ENCODE measurements at regions of chr2 and their contacts with region 1.

Region 1: DNA sequence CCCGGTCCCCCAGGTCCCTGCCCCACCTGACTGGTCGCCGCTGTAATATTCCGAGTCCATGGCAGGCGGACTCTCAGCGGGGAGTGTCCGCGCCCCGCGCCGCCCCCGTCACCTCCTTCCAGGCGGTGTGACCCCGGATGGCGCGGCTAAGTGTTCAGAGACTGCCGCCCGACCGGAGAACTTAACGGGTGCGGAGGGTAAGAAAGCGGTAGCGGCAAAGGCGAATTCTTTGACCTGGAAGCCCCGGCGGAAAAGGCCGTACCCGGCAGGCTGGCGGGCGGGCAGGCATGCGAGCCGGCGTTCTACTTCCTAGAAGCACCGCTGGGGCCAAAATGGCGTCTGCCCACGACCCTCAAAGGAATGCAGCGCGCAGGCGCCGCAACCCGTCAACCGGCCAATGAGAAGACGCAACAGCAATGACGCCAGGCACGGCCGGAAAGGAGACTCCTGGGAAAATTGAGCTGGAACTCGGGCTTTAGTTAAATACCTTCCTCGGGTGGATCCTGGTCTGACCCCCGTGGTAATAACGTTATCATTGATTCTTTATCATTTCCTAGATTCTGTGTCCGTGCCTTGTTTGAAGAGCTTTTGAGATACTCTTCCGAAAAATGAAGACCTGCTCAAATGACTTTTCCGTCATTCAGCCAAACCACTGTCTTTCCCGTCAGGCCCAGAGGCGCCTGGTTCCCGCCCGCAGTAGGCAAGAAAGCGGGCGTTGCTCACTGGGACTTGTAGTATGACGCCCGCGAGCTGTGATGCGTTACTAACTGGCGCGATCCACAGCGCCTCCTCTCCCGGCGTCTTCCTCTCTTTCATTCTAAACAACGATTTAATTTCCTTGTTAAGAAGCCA is at the start of gene IWS1:
- DNase-seq: peak; percentile 85 to 95 (median 92)
- ATAC-seq: peak; percentile 94
- H3K4me3 ChIP-seq: peak within 1 kb of the TSS; percentile 87
- H3K4me3 Mint-ChIP-seq: peak within 1 kb of the TSS; percentile 81 to 99 (median 96)
- H3K27ac ChIP-seq: peak within 1 kb of the TSS; percentile 82
- H3K27ac Mint-ChIP-seq: peak within 1 kb of the TSS; percentile 87 to 99 (median 99)
- H3K4me1 ChIP-seq: peaks cover 6 to 9% of the 10 kb centered on the region in 2 donors
- H3K4me1 Mint-ChIP-seq: peaks cover 14 to 49% (median 43%) of the 10 kb centered on the region in 7 donors
- H3K27me3 ChIP-seq: no peaks in the 10 kb centered on the region
- H3K27me3 Mint-ChIP-seq: peaks cover 0 to 9% (median 0%) of the 10 kb centered on the region in 5 donors
- total RNA-seq, gene IWS1: 24.0 to 57.5 (median 43.4) TPM

Region 2: DNA sequence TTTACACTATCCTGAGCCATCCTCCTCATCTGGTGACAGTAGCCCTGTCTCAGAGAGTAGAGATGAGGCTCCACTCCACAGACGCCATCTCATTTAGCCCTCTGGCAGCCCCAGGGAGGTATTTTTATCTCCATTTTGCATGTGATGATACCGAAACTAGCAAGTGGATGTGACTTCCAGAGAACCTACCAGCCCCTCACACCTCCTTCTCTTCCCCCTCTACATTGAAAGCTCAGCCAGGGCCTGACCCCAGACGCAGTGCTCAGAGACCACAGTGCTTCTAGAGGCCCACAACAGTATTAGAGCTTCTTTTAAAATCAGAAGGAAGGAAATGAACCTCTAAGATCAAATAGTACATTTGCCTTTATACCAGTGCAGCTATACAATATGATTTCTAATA is 862.1 kb before region 1 on chr2:
- CTCF ChIA-PET with region 1: no interaction called
- POLR2A ChIA-PET with region 1: no interaction called
- intact Hi-C with region 1: loop called (anchors 5 to 10 kb)
- DNase-seq: peak in 6 of 9 donors; percentile 31 to 47 (median 38)
- ATAC-seq: peak; percentile 70
- H3K4me3 ChIP-seq: peak overlapping the region; percentile 20
- H3K4me3 Mint-ChIP-seq: peak overlapping the region; percentile 68 to 95 (median 84)
- H3K27ac ChIP-seq: peak overlapping the region; percentile 98
- H3K27ac Mint-ChIP-seq: peak overlapping the region; percentile 93 to 99 (median 97)
- H3K4me1 ChIP-seq: peaks cover 56 to 71% of the 10 kb centered on the region in 2 donors
- H3K4me1 Mint-ChIP-seq: peaks cover 75 to 100% (median 95%) of the 10 kb centered on the region in 7 donors
- H3K27me3 ChIP-seq: no peaks in the 10 kb centered on the region
- H3K27me3 Mint-ChIP-seq: no peaks in the 10 kb centered on the region

Region 3: GRCh38 chr2:127387655-127388422 is 138.5 kb before region 1 on chr2 and contains the start of gene MAP3K2:
- CTCF ChIA-PET with region 1: no interaction called
- POLR2A ChIA-PET with region 1: interaction called, 3 read pairs
- intact Hi-C with region 1: loop called (anchors 1 kb)
- DNase-seq: peak; percentile 89 to 97 (median 93)
- ATAC-seq: peak; percentile 88
- H3K4me3 ChIP-seq: peak within 1 kb of the TSS; percentile 78
- H3K4me3 Mint-ChIP-seq: peak within 1 kb of the TSS; percentile 87 to 97 (median 91)
- H3K27ac ChIP-seq: peak within 1 kb of the TSS; percentile 100
- H3K27ac Mint-ChIP-seq: peak within 1 kb of the TSS; percentile 95 to 99 (median 97)
- H3K4me1 ChIP-seq: peaks cover 23 to 30% of the 10 kb centered on the region in 2 donors
- H3K4me1 Mint-ChIP-seq: peaks cover 45 to 71% (median 67%) of the 10 kb centered on the region in 7 donors
- H3K27me3 ChIP-seq: no peaks in the 10 kb centered on the region
- H3K27me3 Mint-ChIP-seq: peaks cover 0 to 1% (median 0%) of the 10 kb centered on the region in 5 donors
- total RNA-seq, gene MAP3K2: 60.5 to 111 (median 84.5) TPM

Region 4: DNA sequence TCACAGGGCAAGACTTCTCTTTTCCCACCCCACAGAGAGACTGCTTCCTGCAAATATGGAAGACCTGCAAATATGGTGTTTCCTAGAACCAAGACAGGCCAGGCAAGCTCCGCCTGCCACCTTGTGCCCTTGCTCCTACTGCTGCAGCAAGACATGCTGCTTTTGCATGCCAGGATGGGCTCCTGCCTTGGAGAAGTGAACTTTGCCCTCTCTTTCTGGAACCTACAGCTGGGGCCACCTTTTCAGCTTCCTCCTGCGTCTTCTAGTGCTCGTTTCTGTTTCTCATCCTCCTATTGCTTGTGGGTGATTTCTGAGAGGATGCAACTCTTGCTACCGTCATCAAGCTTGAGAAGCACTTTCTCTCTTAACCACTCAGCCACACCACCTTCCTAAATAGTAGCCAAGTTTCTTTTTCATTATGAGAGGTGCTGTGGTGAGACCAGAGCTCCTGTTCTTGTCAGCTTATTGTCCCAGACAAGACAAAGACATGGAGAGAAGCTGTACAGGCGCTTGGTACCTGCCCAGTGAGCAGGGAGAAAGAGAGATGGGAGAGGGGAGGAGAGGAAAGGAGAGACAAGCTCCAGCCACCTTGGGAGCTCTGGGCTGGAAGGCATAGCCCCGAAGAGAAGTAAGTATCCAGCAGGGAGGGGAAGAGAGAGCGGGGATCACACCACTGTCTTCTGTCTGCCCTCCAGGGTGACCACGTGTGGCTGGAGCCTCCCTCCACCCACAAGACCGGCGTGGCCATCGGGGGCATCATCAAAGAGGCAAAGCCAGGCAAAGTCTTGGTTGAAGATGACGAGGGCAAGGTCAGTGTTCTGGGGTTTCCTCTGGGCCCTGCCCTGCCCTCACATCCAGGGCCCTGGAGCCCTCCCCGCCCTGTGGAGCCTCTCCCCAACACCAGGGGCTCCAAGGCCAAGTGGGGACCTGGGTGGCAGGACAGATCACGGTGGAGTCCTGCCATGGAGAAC is 37.4 kb after region 1 on chr2:
- CTCF ChIA-PET with region 1: no interaction called
- POLR2A ChIA-PET with region 1: no interaction called
- intact Hi-C with region 1: loop called in 1 of 2 experiments (anchors 1 kb)
- DNase-seq: no peak
- ATAC-seq: no peak
- H3K4me3 ChIP-seq: no peak overlapping the region
- H3K4me3 Mint-ChIP-seq: peak overlapping the region in 1 of 10 donors; percentile 73
- H3K27ac ChIP-seq: no peak overlapping the region
- H3K27ac Mint-ChIP-seq: peak overlapping the region in 3 of 9 donors; percentile 25 to 77 (median 29)
- H3K4me1 ChIP-seq: no peaks in the 10 kb centered on the region
- H3K4me1 Mint-ChIP-seq: peaks cover 0 to 20% (median 0%) of the 10 kb centered on the region in 7 donors
- H3K27me3 ChIP-seq: no peaks in the 10 kb centered on the region
- H3K27me3 Mint-ChIP-seq: peaks cover 0 to 40% (median 0%) of the 10 kb centered on the region in 5 donors

Region 5: GRCh38 chr2:127615501-127616166 is 89.3 kb after region 1 on chr2:
- CTCF ChIA-PET with region 1: no interaction called
- POLR2A ChIA-PET with region 1: no interaction called
- intact Hi-C with region 1: no loop called
- DNase-seq: peak in 2 of 9 donors; percentile 16 to 31
- ATAC-seq: no peak
- H3K4me3 ChIP-seq: no peak overlapping the region
- H3K4me3 Mint-ChIP-seq: peak overlapping the region in 9 of 10 donors; percentile 22 to 75 (median 58)
- H3K27ac ChIP-seq: no peak overlapping the region
- H3K27ac Mint-ChIP-seq: peak overlapping the region in 7 of 9 donors; percentile 15 to 81 (median 49)
- H3K4me1 ChIP-seq: peaks cover 0 to 6% of the 10 kb centered on the region in 2 donors
- H3K4me1 Mint-ChIP-seq: peaks cover 8 to 36% (median 31%) of the 10 kb centered on the region in 7 donors
- H3K27me3 ChIP-seq: no peaks in the 10 kb centered on the region
- H3K27me3 Mint-ChIP-seq: peaks cover 0 to 21% (median 0%) of the 10 kb centered on the region in 5 donors

Region 6: DNA sequence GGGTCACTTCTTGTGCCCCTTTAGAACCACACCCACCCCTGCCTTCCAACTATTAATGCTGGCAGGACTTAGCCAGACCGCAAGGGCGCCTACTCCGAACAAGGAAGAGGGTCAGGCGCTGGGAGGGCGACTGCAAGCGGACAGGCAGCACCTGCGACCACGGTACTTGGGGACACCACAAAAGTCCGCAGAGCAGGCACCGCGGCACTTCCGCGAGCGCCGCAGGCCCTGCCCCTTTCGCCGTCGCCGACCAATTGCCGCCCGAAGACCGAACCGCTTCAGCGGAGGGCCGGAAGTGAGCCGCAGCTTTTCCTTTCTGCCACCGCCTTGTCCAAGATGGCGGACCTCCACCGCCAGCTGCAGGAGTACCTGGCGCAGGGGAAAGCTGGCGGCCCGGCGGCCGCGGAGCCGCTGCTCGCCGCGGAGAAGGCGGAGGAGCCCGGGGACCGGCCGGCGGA is 174.8 kb after region 1 on chr2 and contains the start of gene SFT2D3:
- CTCF ChIA-PET with region 1: no interaction called
- POLR2A ChIA-PET with region 1: interaction called, 15 read pairs
- intact Hi-C with region 1: loop called (anchors 1 kb)
- DNase-seq: peak; percentile 84 to 92 (median 89)
- ATAC-seq: peak; percentile 83
- H3K4me3 ChIP-seq: peak within 1 kb of the TSS; percentile 75
- H3K4me3 Mint-ChIP-seq: peak within 1 kb of the TSS; percentile 88 to 96 (median 94)
- H3K27ac ChIP-seq: peak within 1 kb of the TSS; percentile 83
- H3K27ac Mint-ChIP-seq: peak within 1 kb of the TSS; percentile 96 to 99 (median 98)
- H3K4me1 ChIP-seq: peaks cover 21 to 29% of the 10 kb centered on the region in 2 donors
- H3K4me1 Mint-ChIP-seq: peaks cover 18 to 52% (median 46%) of the 10 kb centered on the region in 7 donors
- H3K27me3 ChIP-seq: no peaks in the 10 kb centered on the region
- H3K27me3 Mint-ChIP-seq: peaks cover 0 to under 1% (median 0%) of the 10 kb centered on the region in 5 donors
- total RNA-seq, gene SFT2D3: 6.0 to 17.8 (median 8.9) TPM

Region 7: GRCh38 chr2:127897531-127898211 is 371.3 kb after region 1 on chr2:
- CTCF ChIA-PET with region 1: no interaction called
- POLR2A ChIA-PET with region 1: no interaction called
- intact Hi-C with region 1: no loop called
- DNase-seq: no peak
- ATAC-seq: no peak
- H3K4me3 ChIP-seq: no peak overlapping the region
- H3K4me3 Mint-ChIP-seq: no peak overlapping the region
- H3K27ac ChIP-seq: no peak overlapping the region
- H3K27ac Mint-ChIP-seq: no peak overlapping the region
- H3K4me1 ChIP-seq: no peaks in the 10 kb centered on the region
- H3K4me1 Mint-ChIP-seq: no peaks in the 10 kb centered on the region
- H3K27me3 ChIP-seq: no peaks in the 10 kb centered on the region
- H3K27me3 Mint-ChIP-seq: peaks cover 0 to 4% (median 0%) of the 10 kb centered on the region in 5 donors

Region 8: GRCh38 chr2:128027801-128028667 is 501.7 kb after region 1 on chr2 and contains the start of gene SAP130:
- CTCF ChIA-PET with region 1: no interaction called
- POLR2A ChIA-PET with region 1: no interaction called
- intact Hi-C with region 1: loop called (anchors 1 kb)
- DNase-seq: peak; percentile 96 to 99 (median 98)
- ATAC-seq: peak; percentile 86
- H3K4me3 ChIP-seq: peak within 1 kb of the TSS; percentile 86
- H3K4me3 Mint-ChIP-seq: peak within 1 kb of the TSS; percentile 87 to 98 (median 98)
- H3K27ac ChIP-seq: peak within 1 kb of the TSS; percentile 91
- H3K27ac Mint-ChIP-seq: peak within 1 kb of the TSS; percentile 52 to 97 (median 93)
- H3K4me1 ChIP-seq: peaks cover 0 to 14% of the 10 kb centered on the region in 2 donors
- H3K4me1 Mint-ChIP-seq: peaks cover 14 to 32% (median 28%) of the 10 kb centered on the region in 7 donors
- H3K27me3 ChIP-seq: no peaks in the 10 kb centered on the region
- H3K27me3 Mint-ChIP-seq: peaks cover 0 to 16% (median 0%) of the 10 kb centered on the region in 5 donors
- total RNA-seq, gene SAP130: 29.9 to 38.0 (median 30.9) TPM